ENCODE measurements at regions of chr17 and their contacts with region 1.

Region 1: DNA sequence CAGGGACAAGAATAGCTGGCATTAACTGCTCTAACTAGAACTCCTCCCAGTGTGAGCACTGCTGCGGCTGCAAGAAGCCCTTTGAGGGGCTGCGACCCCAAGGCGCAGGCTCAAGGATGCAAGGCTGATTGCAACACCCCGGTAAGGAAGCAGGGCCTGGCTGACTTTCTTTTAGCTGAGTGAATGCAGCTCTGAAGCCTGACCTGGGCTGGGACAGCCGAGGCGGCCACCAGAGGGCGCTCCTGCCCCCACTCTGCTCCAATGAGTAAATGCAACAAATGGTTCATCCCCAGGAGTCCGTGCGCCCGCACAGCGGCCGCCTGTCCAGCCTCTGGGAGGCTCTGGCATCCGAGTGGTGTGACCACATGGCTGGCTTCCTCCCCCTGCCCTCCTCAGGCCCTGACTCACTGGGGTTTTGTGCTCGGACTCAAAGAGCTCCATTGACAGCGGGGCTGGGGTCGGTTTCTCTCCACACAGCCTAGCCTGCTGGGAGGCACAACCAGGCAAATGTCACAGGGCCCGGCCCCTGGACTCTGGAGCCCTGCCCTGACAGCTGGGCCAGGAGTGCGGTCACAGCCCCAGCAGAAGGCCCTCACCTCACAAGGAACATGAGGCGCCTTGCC is at the start of gene SMIM5:
- DNase-seq: peak; percentile 82
- H3K4me3 ChIP-seq: peak within 1 kb of the TSS; percentile 22
- H3K27ac ChIP-seq: no peak within 1 kb of the TSS
- H3K4me1 ChIP-seq: peaks cover 14% of the 10 kb centered on the region
- H3K27me3 ChIP-seq: no peaks in the 10 kb centered on the region
- CTCF ChIP-seq: peak; percentile 98
- total RNA-seq, gene SMIM5: 0.22 TPM in 1 of 2 replicates, not detected in the other

Region 2: GRCh38 chr17:75557075-75557882 is 75.7 kb before region 1 on chr17:
- CTCF ChIA-PET with region 1: no interaction called
- POLR2A ChIA-PET with region 1: no interaction called
- intact Hi-C with region 1: no loop called
- DNase-seq: no peak
- H3K4me3 ChIP-seq: no peak overlapping the region
- H3K27ac ChIP-seq: no peak overlapping the region
- H3K4me1 ChIP-seq: no peaks in the 10 kb centered on the region
- H3K27me3 ChIP-seq: no peaks in the 10 kb centered on the region
- CTCF ChIP-seq: no peak

Region 3: GRCh38 chr17:75652915-75653549 is 20.1 kb after region 1 on chr17:
- CTCF ChIA-PET with region 1: interaction called, 21 read pairs
- POLR2A ChIA-PET with region 1: no interaction called
- intact Hi-C with region 1: no loop called
- DNase-seq: peak; percentile 62
- H3K4me3 ChIP-seq: no peak overlapping the region
- H3K27ac ChIP-seq: no peak overlapping the region
- H3K4me1 ChIP-seq: no peaks in the 10 kb centered on the region
- H3K27me3 ChIP-seq: no peaks in the 10 kb centered on the region
- CTCF ChIP-seq: peak; percentile 84

Region 4: DNA sequence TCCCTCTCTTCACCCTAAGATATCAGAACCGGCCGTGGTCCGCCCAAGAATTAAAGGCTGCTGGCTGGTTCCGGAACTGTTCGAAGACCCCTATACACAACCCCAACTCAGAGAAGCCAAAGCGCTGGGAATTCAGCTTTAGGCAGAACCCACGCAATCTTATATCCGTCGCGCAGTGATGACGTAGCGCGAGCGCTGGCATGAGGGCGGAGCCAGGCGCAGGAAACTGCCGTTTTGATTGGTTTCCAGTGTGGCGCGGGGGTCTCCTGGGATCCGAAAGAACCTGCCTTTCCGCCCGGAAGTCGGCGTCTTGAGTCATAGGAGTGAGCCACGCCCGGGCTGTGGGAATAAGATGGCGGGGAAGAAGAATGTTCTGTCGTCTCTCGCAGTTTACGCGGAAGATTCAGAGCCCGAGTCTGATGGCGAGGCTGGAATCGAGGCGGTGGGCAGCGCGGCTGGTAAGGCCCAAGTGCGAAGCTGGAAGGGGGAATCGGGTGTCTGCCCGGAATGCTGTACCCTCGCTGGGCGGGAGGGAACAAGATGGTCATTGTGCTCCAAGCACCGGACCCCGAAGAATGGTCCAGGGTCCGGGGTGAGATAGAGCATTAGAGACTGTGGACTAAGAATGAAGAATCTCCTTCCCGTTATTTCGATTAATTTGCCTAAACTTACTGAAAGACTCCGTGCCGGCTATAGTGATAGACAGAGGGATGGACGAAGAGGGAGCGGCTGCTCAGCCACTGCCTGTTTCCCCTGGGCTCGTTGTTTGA is 34.2 kb after region 1 on chr17 and contains the starts of genes RECQL5 and SAP30BP:
- CTCF ChIA-PET with region 1: interaction called, 10 read pairs
- POLR2A ChIA-PET with region 1: no interaction called
- intact Hi-C with region 1: no loop called
- DNase-seq: peak; percentile 99
- H3K4me3 ChIP-seq: peak within 1 kb of the TSS; percentile 82
- H3K27ac ChIP-seq: peak within 1 kb of the TSS; percentile 79
- H3K4me1 ChIP-seq: peaks cover 15% of the 10 kb centered on the region
- H3K27me3 ChIP-seq: no peaks in the 10 kb centered on the region
- CTCF ChIP-seq: no peak
- total RNA-seq, gene RECQL5: 30.6 and 39.0 TPM in 2 replicates
- total RNA-seq, gene SAP30BP: 98.1 and 114 TPM in 2 replicates

Region 5: DNA sequence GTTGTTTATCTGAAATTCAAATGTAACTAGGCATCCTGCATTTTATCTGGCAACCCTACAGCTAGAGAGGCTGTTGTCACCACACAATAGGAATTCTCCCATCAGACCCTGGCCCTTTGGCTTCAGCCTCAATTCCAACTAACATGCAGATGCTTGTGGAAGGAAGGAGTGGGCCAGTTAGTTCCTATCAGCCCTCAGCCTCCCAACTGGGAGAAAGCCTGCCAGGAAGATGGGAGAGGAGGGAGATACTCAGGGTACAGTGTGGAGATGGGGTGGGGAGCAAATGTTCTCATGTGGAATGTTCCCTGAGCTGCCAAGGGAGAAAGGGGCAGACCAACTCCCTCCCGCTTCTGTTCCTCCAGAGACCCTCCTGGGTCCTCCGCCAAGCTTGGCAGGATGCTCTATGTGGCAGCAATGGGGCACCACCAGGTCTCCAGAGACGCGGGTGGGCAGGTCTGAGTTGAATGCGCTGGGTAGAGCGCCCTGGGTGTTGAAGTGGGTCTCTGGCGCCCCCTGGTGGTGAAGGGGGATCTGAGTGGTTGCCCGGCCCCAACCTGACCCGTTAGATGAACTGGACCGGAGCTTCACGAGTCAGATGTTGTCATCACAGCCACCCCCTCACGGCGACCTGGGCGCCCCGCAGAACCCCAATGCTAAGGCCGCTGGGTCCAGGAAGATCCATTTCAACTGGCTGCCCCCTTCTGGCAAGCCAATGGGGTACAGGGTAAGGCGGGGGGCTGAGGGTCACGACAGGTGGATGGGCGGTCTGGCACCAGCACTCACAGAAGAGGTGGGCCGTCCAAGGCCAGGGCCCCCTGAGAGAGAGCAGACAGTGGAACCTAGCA is 116.8 kb after region 1 on chr17:
- CTCF ChIA-PET with region 1: interaction called, 95 read pairs
- POLR2A ChIA-PET with region 1: no interaction called
- intact Hi-C with region 1: loop called (anchors 1 kb)
- DNase-seq: peak; percentile 84
- H3K4me3 ChIP-seq: no peak overlapping the region
- H3K27ac ChIP-seq: no peak overlapping the region
- H3K4me1 ChIP-seq: peaks cover 5% of the 10 kb centered on the region
- H3K27me3 ChIP-seq: no peaks in the 10 kb centered on the region
- CTCF ChIP-seq: peak; percentile 95

Region 6: DNA sequence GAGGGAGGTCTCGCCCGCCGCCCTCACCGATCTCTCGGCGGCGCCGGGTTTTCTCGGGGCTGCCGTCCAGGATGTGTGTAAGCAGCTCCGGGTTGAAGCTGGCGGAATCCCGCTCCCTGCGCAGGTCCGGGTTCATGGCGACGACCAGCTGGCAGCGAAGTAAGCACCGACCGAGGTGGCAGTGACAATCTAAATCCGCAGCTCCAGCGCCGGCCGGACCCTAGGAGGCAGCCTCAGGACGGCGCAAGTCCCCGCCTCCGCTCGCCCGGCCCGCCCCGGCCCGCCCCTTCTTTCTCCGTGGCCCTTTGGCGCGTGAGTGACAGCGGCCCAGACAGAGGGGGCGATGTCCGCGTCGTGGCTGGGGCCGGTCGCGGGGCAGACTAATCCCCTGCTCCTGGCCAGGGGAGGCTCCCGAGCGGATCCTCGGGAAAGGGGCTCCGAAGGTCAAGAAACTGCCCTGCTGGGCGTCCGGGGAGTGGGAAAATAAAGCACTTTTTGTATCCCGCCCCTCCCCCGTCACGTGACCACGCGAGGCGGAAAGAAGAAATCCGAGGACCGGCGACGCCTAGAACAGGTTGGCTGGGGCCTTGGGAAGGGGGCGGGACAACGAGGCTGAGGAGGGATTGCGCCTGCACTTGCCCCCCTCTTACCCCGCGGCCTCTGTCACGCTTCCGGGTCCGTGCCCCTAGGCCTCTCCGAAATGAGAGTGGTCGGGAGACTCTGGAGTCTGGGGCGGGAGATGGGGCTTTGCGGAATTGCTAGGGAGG is 346.1 kb after region 1 on chr17 and contains the starts of genes ACOX1 and TEN1:
- CTCF ChIA-PET with region 1: interaction called, 14 read pairs
- POLR2A ChIA-PET with region 1: no interaction called
- intact Hi-C with region 1: no loop called
- DNase-seq: peak; percentile 98
- H3K4me3 ChIP-seq: peak within 1 kb of the TSS; percentile 66
- H3K27ac ChIP-seq: peak within 1 kb of the TSS; percentile 95
- H3K4me1 ChIP-seq: peaks cover 26% of the 10 kb centered on the region
- H3K27me3 ChIP-seq: no peaks in the 10 kb centered on the region
- CTCF ChIP-seq: peak; percentile 43
- total RNA-seq, gene ACOX1: 35.0 and 39.5 TPM in 2 replicates
- total RNA-seq, gene TEN1: 13.3 and 16.2 TPM in 2 replicates